Esophagus muscularis mucosa (tissue), 4 donors: ENCODE measurements at regions of chr2 and their contacts with region 1.

Region 1: GRCh38 chr2:202149155-202149762 is 76.2 kb downstream of the KIAA2012 start:
- DNase-seq: no peak
- H3K4me3 ChIP-seq: peak overlapping the region in 1 of 4 donors; percentile 20
- H3K27ac ChIP-seq: peak overlapping the region; percentile 48 to 83 (median 54)
- H3K4me1 ChIP-seq: peaks cover 15 to 39% (median 36%) of the 10 kb centered on the region in 4 donors
- H3K27me3 ChIP-seq: no peaks in the 10 kb centered on the region
- CTCF ChIP-seq: no peak
- EP300 ChIP-seq: no peak
- POLR2A ChIP-seq: no peak

Region 2: DNA sequence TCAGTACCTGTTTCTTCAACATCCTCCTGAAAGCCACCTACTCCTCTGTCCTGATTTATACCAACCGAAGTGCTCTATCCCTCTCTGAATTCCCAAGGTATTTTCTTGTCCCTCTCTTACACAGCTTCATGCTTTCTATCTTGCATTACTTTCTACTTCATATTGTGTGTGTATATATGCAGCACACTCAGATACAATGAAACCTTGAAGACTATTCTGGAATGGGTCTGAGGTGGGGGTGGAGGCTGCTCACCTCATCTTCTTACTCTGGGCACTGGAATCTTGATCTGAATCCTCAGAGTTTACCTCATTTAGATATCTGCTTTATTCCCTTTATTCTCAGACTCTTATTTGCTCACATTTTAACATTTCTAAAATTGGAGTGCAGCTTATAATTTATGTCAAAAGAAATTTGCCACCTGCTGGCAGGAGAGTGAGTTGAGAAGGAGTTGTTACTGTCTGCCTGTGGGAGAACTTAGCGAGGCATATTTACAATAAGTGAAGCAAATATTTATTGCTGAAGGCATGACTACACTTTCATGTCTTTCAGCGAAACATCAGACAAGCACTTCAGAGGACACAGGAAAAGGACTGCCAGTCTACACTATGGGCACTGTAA is 92.8 kb before region 1 on chr2:
- intact Hi-C with region 1: loop called (anchors 10 kb)
- DNase-seq: no peak
- H3K4me3 ChIP-seq: no peak overlapping the region
- H3K27ac ChIP-seq: no peak overlapping the region
- H3K4me1 ChIP-seq: peaks cover 5 to 21% (median 20%) of the 10 kb centered on the region in 4 donors
- H3K27me3 ChIP-seq: no peaks in the 10 kb centered on the region
- CTCF ChIP-seq: peak; percentile 26 to 49 (median 43)
- EP300 ChIP-seq: no peak
- POLR2A ChIP-seq: no peak

Region 3: GRCh38 chr2:202238234-202239197 is 89.3 kb after region 1 on chr2 and contains the start of gene SUMO1:
- intact Hi-C with region 1: no loop called
- DNase-seq: peak; percentile 97
- H3K4me3 ChIP-seq: peak within 1 kb of the TSS; percentile 96 to 99 (median 98)
- H3K27ac ChIP-seq: peak within 1 kb of the TSS; percentile 96 to 98 (median 98)
- H3K4me1 ChIP-seq: peaks cover 14 to 45% (median 42%) of the 10 kb centered on the region in 4 donors
- H3K27me3 ChIP-seq: no peaks in the 10 kb centered on the region
- CTCF ChIP-seq: no peak
- EP300 ChIP-seq: no peak
- POLR2A ChIP-seq: no peak
- total RNA-seq, gene SUMO1: 54.6 to 85.6 (median 74.3) TPM